HEK293 (cell line): ENCODE measurements at regions of chr12 and their contacts with region 1.

Region 1: GRCh38 chr12:6302621-6303020 is 7.9 kb upstream of the PLEKHG6 start:
- H3K4me3 ChIP-seq: no peak overlapping the region
- H3K27ac ChIP-seq: no peak overlapping the region
- H3K4me1 ChIP-seq: no peaks in the 10 kb centered on the region
- CTCF ChIP-seq: no peak

Region 2: DNA sequence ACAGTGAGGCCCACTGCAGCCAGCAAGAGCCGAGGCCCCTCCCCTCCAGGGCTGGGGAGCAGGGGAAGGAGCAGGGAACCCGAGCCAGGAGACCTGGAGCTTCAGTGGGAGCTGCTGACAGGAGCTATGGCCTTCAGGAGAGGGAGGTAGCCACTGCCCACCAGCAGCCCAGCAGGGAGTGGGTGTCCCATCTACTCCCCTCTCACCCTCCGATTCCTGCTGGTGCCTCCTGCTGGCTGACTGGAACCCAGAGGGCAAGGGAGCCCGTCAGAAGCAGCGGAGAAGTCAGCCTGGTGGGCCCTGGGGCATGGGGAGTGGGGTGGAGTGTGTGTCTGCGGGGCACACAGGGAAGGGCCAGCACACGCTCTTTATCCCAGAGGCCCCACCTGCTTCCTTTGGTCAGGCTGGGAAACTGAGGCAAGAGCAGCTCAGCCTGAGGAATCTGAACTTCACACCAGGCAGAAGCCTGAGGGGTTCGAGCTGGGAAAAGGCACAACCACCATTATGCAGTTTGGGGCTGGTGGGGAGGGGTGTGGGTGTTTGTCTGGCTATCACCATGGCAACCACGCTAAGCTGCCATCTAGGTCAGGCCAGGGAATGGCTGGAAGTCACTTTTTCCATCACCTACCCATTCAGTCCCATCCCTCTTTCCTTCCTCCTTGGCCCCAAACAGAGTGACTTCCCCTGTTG is 28.9 kb before region 1 on chr12:
- CTCF ChIA-PET with region 1: no interaction called
- POLR2A ChIA-PET with region 1: no interaction called
- H3K4me3 ChIP-seq: no peak overlapping the region
- H3K27ac ChIP-seq: no peak overlapping the region; the same call in 1 of the 2 replicates
- H3K4me1 ChIP-seq: peaks cover 8% of the 10 kb centered on the region; the same call in 1 of the 2 replicates
- CTCF ChIP-seq: no peak

Region 3: GRCh38 chr12:6352193-6353173 is 49.9 kb after region 1 on chr12:
- CTCF ChIA-PET with region 1: interaction called, 11 read pairs
- POLR2A ChIA-PET with region 1: no interaction called
- H3K4me3 ChIP-seq: no peak overlapping the region
- H3K27ac ChIP-seq: no peak overlapping the region
- H3K4me1 ChIP-seq: no peaks in the 10 kb centered on the region
- CTCF ChIP-seq: no peak